Breast epithelium (tissue), 4 donors: ENCODE measurements at regions of chr5 and their contacts with region 1.

Region 1: GRCh38 chr5:33011803-33012202 is 300.7 kb downstream of the NPR3 start:
- DNase-seq: no peak
- H3K4me3 ChIP-seq: no peak overlapping the region
- H3K27ac ChIP-seq: no peak overlapping the region
- H3K4me1 ChIP-seq: no peaks in the 10 kb centered on the region
- H3K27me3 ChIP-seq: no peaks in the 10 kb centered on the region
- CTCF ChIP-seq: no peak
- POLR2A ChIP-seq: no peak

Region 2: DNA sequence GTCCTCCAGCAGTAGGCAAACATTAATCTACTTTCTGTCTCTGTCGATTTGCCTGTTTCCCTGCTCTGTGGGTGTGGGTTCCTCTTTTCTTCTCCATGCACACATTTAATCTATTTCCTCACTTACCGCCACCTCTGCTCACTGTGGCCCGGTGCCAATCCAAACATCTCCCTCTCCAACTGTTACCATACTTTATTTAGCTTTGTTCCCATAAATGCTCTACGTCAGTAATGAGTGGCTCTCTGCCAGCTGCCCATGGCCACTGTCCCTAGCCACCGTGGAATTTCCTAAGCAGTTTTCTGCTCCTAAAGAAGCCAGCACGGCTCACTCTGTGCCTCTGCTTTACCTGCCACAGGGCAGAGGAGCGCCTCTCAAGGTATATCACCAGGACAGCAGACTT is 818.2 kb before region 1 on chr5:
- intact Hi-C with region 1: no loop called
- DNase-seq: peak; percentile 87 to 89
- H3K4me3 ChIP-seq: peak overlapping the region in 2 of 3 donors; percentile 26 to 52
- H3K27ac ChIP-seq: peak overlapping the region; percentile 41 to 80
- H3K4me1 ChIP-seq: no peaks in the 10 kb centered on the region
- H3K27me3 ChIP-seq: no peaks in the 10 kb centered on the region
- CTCF ChIP-seq: no peak
- POLR2A ChIP-seq: no peak

Region 3: DNA sequence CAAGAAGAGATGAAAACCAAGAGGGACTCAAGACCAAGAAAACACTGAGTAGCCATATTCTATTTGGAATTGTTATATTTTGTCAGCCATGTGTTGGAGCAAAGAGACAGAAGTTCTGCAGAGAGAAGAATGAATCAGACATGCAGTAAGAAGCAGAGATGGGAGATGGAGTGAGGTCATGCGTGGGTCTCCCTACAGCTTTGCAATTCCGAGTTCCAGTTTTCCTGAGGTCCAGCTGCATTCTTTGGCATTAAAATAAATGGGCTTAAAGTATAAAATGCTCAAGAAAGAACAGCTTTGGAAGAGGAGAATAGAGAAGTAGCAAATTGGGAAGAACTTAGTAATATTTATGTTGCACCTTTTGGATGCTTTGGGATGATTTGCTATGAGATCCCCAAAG is 60.9 kb after region 1 on chr5:
- intact Hi-C with region 1: loop called (anchors 2 kb)
- DNase-seq: no peak
- H3K4me3 ChIP-seq: no peak overlapping the region
- H3K27ac ChIP-seq: no peak overlapping the region
- H3K4me1 ChIP-seq: no peaks in the 10 kb centered on the region
- H3K27me3 ChIP-seq: no peaks in the 10 kb centered on the region
- CTCF ChIP-seq: no peak
- POLR2A ChIP-seq: no peak